Activated CD4-positive, alpha-beta T cell treated with anti-CD3 and anti-CD28 coated beads, Interleukin-2, amount 10 ng/mL, durations not matched to agents 7 days and 5 days (primary cell): ENCODE measurements at regions of chr20 and their contacts with region 1.

Region 1: DNA sequence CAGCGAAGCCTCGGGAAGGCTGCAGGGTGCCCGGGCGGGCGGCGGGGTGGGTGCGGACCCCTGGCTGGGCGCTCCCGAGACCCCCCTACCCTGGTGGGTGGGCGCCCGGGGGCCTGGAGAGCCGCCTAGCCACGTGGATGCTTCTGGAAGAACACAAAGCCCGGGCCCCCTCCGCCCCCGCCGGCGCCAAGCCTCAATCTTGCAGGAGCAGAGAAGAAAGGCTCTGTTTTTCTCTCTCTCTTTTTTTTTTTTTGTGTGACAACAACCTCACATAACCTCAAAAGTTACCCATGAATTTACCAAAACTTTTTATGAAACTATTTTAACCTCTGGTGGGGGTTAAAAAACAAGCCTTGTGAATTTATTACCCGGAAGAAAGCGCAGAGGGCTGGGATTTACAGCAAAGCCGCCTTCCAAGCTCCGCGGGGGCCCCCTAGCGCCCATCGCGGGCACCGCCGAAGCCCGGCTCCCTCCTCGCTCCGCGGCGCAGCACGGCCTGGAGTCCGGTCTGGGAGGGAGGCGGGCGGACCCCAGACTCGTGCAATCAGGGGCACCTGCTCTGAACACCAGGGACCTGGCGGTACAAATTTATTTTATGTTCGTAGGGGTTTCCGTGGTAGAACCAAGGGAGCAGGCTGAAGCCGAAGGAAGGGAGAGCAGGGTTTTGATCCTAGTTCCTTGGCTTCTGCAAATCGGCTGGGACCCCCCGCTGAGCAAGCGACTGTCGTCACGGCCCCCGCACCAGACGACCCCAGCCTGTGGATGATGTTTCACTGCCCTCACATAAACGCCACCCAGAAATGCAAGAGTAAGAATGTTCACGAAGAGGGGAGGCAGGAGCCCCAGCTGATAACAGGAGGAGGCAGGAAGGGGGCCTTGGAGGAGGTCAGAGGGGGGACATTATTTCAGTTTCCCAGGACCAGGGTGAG is 58.9 kb downstream of the ZNF831 start:
- DNase-seq: peak; percentile 82
- H3K4me3 Mint-ChIP-seq: peak overlapping the region; percentile 71
- H3K27ac Mint-ChIP-seq: peak overlapping the region; percentile 70
- H3K4me1 Mint-ChIP-seq: peaks cover 22% of the 10 kb centered on the region
- H3K27me3 Mint-ChIP-seq: no peaks in the 10 kb centered on the region

Region 2: DNA sequence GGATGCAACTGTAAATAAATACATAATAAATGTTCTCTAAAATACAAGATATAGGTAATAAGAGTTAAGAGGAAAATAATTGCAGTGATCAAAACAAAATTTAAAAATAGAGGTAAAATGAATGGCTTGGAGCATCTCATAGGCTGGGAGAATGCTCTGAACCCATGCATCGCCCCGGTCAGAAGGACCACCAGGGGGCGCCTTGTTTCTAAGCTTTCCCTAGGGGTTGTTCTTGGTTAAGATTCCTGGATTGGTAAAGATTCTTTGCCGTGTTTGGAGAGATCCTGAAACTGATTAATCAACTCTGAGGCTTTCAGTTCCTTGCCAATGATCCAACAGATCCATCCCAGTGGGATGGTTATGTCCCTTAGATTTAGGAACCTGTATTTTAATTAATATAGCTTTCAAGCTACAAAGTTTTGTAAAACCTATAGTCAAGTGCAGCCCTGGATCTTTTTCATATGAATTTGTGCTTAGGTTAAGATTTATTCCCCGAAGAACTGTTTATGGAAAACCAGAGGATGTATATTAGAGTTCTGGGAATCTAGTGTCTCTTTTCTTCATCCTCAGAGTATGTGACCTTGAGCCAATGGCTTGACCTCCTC is 134.6 kb before region 1 on chr20:
- CTCF ChIA-PET with region 1: interaction called, 12 read pairs
- POLR2A ChIA-PET with region 1: no interaction called
- DNase-seq: peak; percentile 86
- H3K4me3 Mint-ChIP-seq: no peak overlapping the region
- H3K27ac Mint-ChIP-seq: no peak overlapping the region
- H3K4me1 Mint-ChIP-seq: peaks cover 4% of the 10 kb centered on the region
- H3K27me3 Mint-ChIP-seq: peaks cover 26% of the 10 kb centered on the region

Region 3: GRCh38 chr20:59191756-59192532 is 30.6 kb before region 1 on chr20:
- CTCF ChIA-PET with region 1: no interaction called
- POLR2A ChIA-PET with region 1: no interaction called
- DNase-seq: no peak
- H3K4me3 Mint-ChIP-seq: no peak overlapping the region
- H3K27ac Mint-ChIP-seq: no peak overlapping the region
- H3K4me1 Mint-ChIP-seq: no peaks in the 10 kb centered on the region
- H3K27me3 Mint-ChIP-seq: no peaks in the 10 kb centered on the region

Region 4: GRCh38 chr20:59207742-59208357 is 14.7 kb before region 1 on chr20:
- CTCF ChIA-PET with region 1: interaction called, 16 read pairs
- POLR2A ChIA-PET with region 1: no interaction called
- DNase-seq: peak; percentile 88
- H3K4me3 Mint-ChIP-seq: no peak overlapping the region
- H3K27ac Mint-ChIP-seq: no peak overlapping the region
- H3K4me1 Mint-ChIP-seq: peaks cover 17% of the 10 kb centered on the region
- H3K27me3 Mint-ChIP-seq: no peaks in the 10 kb centered on the region

Region 5: GRCh38 chr20:59232618-59233017 is 10.1 kb after region 1 on chr20:
- CTCF ChIA-PET with region 1: interaction called, 11 read pairs
- POLR2A ChIA-PET with region 1: no interaction called
- DNase-seq: no peak
- H3K4me3 Mint-ChIP-seq: no peak overlapping the region
- H3K27ac Mint-ChIP-seq: no peak overlapping the region
- H3K4me1 Mint-ChIP-seq: peaks cover 18% of the 10 kb centered on the region
- H3K27me3 Mint-ChIP-seq: no peaks in the 10 kb centered on the region